ENCODE measurements at regions of chr18 and their contacts with region 1.

Region 1: DNA sequence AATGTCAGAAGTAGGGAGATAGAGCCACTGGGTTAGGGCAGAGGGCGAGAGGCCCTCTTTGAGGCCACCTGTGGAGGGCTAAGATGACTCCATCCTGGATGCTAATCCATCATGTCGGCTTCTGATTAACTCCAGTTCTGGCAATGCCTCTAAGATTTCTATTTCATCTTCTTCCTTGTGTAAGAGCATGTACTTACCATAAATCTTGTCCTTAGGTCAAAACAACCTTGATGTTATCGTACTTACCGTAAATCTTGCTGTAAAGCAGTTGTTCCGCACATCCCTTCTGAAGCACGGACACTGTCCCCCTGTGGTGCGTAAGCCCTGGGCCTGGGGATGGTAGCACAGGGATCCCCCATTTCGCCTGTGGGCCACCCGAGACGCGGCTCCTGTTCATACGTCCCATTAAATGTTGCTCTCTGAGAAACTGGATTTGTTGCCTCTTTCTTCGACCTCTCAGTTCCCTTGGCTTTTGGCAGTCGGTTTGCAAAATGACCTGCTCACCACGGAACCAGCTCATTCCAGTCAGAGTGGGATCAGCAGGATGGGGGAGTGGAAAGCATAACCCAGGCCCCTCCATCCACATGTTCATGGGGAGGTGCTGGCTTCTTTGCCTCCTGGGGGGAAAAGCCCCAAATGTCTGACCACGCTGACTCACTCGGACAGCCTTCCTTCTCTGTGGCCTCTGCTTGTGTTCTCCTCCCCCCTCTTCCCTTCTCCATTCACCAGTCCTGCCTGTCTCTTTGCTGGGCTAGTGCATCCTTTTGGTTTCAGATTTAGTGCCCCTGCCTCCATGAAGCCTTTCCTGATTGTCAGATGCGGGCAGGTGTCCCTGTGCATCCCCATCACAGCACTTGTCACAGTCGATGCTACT is 49.9 kb downstream of the RAB31 start:
- DNase-seq: no peak
- H3K4me3 ChIP-seq: no peak overlapping the region
- H3K27ac ChIP-seq: no peak overlapping the region
- H3K4me1 ChIP-seq: peaks cover 15% of the 10 kb centered on the region
- H3K27me3 ChIP-seq: no peaks in the 10 kb centered on the region
- CTCF ChIP-seq: no peak
- POLR2A ChIP-seq: no peak

Region 2: DNA sequence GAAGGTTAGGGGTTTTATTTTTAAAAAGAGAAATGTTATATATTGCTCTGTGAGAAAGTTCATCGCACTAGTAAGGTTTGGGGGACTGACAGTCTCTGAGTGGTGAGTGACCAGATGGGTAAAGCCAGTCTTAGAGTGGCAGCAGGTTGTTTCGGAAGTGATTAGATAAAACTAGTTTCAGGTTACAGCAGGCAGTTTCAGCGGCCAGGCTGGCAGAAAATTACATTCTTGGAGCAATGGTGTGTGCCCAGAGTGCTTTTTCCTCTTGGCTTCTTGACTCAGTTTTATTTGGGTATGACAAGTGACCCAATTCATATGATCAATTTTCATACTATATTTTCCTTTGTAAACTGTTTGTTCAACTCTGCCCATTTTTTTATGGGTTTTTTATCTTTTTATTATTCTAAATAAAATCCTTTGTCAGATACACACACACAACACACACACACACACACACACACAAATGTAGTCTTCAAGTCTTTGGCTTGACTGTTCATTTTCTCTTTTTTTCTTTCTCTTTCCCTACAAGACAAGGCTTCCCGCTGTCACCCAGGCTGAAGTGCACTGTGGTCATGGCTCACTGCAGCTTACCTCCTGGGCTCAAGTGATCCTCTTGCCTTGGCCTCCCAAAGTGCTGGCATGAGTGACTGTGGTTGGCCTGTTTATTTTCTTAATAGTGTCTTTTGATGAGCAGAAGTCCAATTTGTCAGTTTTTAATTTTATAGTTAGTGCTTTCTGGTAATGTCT is 251.8 kb before region 1 on chr18:
- CTCF ChIA-PET with region 1: no interaction called
- POLR2A ChIA-PET with region 1: no interaction called
- dilution Hi-C with region 1: no loop called
- intact Hi-C with region 1: no loop called
- DNase-seq: no peak
- H3K4me3 ChIP-seq: no peak overlapping the region
- H3K27ac ChIP-seq: no peak overlapping the region
- H3K4me1 ChIP-seq: no peaks in the 10 kb centered on the region
- H3K27me3 ChIP-seq: no peaks in the 10 kb centered on the region
- CTCF ChIP-seq: no peak
- POLR2A ChIP-seq: no peak

Region 3: GRCh38 chr18:9708057-9708433 is 49.9 kb before region 1 on chr18 and contains the start of gene RAB31:
- CTCF ChIA-PET with region 1: interaction called, 3 read pairs
- POLR2A ChIA-PET with region 1: no interaction called
- dilution Hi-C with region 1: no loop called
- intact Hi-C with region 1: loop called (anchors 5 kb)
- DNase-seq: peak; percentile 67
- H3K4me3 ChIP-seq: peak within 1 kb of the TSS; percentile 79 to 98 (median 91)
- H3K27ac ChIP-seq: peak within 1 kb of the TSS; percentile 70
- H3K4me1 ChIP-seq: peaks cover 23% of the 10 kb centered on the region
- H3K27me3 ChIP-seq: no peaks in the 10 kb centered on the region
- CTCF ChIP-seq: no peak
- POLR2A ChIP-seq: peak; percentile 52
- total RNA-seq, gene RAB31: 27.9 and 30.5 TPM in 2 replicates

Region 4: DNA sequence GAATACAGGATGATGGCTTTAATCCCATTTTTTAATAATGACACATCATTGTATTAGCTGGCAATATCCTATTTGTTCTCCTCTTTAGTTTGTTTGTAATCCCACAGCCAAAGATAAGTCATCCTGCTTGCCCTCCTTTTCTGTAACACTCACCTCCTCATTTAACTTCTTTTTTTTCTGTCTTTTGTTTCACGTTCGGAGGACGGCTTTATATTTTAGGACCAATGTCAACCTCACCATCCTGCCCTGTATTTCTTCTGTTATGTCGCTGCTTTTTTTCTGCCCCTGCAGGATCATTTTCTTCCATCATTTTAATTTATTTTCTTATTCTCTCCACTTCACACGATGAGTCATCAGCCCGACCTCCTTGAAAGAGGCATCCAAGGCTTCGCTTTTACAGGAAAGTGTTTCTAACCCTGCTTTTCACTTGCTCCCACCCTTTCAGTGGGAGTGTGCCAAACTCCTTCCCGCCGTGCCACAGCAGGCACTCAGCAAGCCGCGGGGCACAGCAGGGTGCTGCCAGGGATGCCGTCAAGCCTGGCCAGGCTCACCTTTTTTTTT is 38.5 kb before region 1 on chr18:
- CTCF ChIA-PET with region 1: interaction called, 4 read pairs
- POLR2A ChIA-PET with region 1: no interaction called
- dilution Hi-C with region 1: no loop called
- intact Hi-C with region 1: loop called (anchors 2 kb)
- DNase-seq: peak; percentile 85
- H3K4me3 ChIP-seq: peak overlapping the region in 2 of 3 experiments; percentile 2 to 40
- H3K27ac ChIP-seq: peak overlapping the region; percentile 58
- H3K4me1 ChIP-seq: peaks cover 6% of the 10 kb centered on the region
- H3K27me3 ChIP-seq: no peaks in the 10 kb centered on the region
- CTCF ChIP-seq: no peak
- POLR2A ChIP-seq: no peak